ENCODE measurements at regions of chr11 and their contacts with region 1.

Region 1: DNA sequence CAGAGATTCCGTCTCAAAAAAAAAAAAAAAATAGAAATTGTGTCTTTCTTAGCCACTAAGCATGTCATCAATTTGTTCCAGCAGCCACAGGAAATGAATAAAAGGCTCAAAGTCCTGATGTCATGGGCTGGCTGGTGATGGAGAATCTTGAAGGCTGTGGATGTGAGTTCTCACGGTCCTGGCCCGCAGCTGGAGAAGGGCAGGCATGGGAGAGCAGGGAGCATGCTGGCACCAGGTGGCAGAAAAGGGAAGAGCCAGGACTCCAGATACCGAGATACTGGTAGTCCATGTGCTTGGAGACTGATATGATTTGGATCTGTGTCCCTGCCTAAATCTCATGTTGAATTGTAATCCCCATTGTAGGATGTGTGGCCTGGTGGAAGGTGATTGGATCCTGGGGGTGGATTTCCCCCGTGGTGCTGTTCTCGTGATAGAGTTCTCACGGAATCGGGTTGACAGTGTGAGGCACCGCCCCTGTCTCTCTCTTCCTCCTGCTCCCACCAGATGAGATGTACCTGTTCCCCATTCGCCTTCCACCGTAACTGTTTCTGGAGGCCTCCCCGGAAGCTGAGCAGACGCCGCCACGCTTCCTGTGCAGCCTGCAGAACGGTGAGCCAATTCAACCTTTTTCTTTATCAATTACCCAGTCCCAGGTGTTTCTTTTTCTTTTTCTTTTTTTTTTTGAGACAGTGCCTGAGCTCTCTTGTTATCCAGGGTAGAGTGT is 18.1 kb downstream of the MRGPRD start:
- DNase-seq: peak in 12 of 14 experiments; percentile 14 to 86 (median 39)
- ATAC-seq: peak; percentile 89
- H3K4me3 ChIP-seq: peak overlapping the region; percentile 16
- H3K4me3 Mint-ChIP-seq: peak overlapping the region; percentile 63
- H3K27ac ChIP-seq: peak overlapping the region in 1 of 2 donors; percentile 20
- H3K27ac Mint-ChIP-seq: peak overlapping the region; percentile 92
- H3K4me1 ChIP-seq: peaks cover 56% of the 10 kb centered on the region
- H3K4me1 Mint-ChIP-seq: peaks cover 19% of the 10 kb centered on the region
- H3K27me3 ChIP-seq: no peaks in the 10 kb centered on the region
- H3K27me3 Mint-ChIP-seq: peaks cover 2% of the 10 kb centered on the region
- CTCF ChIP-seq: no peak

Region 2: DNA sequence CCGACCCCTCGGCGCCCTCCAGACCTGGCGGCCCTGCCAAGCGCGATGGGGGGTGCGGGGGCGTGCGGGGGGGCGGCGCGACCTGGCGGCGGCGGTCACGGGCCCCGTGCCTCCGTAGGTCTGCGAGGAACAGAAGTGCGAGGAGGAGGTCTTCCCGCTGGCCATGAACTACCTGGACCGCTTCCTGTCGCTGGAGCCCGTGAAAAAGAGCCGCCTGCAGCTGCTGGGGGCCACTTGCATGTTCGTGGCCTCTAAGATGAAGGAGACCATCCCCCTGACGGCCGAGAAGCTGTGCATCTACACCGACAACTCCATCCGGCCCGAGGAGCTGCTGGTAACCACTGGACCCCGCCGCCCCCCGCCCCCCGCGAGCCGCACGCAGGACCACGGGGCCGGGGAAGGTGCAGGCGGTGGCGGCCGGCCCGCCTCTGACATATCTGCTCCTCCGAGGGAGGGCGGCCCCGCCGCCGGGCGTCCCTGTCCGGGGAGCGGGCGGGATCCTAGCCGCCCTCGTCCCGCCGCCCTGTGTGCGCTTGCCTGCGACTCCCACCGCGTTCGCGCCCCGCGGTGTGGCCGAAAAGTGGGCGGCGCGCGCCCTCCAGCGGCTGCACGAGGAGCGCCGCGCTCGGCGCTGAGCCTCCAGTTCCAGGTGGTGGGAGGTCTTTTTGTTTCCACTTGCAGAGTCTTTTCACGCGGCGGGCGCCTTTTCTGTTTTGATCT is 680.4 kb after region 1 on chr11:
- CTCF ChIA-PET with region 1: no interaction called
- POLR2A ChIA-PET with region 1: no interaction called
- intact Hi-C with region 1: loop called in 1 of 2 experiments (anchors 10 kb)
- DNase-seq: peak; percentile 55 to 90 (median 74)
- ATAC-seq: peak; percentile 77
- H3K4me3 ChIP-seq: peak overlapping the region; percentile 64
- H3K4me3 Mint-ChIP-seq: peak overlapping the region; percentile 85
- H3K27ac ChIP-seq: no peak overlapping the region
- H3K27ac Mint-ChIP-seq: no peak overlapping the region
- H3K4me1 ChIP-seq: peaks cover 44% of the 10 kb centered on the region
- H3K4me1 Mint-ChIP-seq: peaks cover 31% of the 10 kb centered on the region
- H3K27me3 ChIP-seq: peaks cover 31 to 34% of the 10 kb centered on the region in 2 experiments
- H3K27me3 Mint-ChIP-seq: peaks cover 34% of the 10 kb centered on the region
- CTCF ChIP-seq: peak; percentile 92